MCF 10A (cell line): ENCODE measurements at regions of chr7 and their contacts with region 1.

Region 1: GRCh38 chr7:99270683-99271082 is 2.0 kb upstream of the MYH16 start:
- DNase-seq: no peak
- H3K4me3 Mint-ChIP-seq: no peak overlapping the region
- H3K27ac Mint-ChIP-seq: no peak overlapping the region
- H3K4me1 Mint-ChIP-seq: peaks cover 27% of the 10 kb centered on the region
- H3K27me3 Mint-ChIP-seq: no peaks in the 10 kb centered on the region
- CTCF ChIP-seq: no peak

Region 2: DNA sequence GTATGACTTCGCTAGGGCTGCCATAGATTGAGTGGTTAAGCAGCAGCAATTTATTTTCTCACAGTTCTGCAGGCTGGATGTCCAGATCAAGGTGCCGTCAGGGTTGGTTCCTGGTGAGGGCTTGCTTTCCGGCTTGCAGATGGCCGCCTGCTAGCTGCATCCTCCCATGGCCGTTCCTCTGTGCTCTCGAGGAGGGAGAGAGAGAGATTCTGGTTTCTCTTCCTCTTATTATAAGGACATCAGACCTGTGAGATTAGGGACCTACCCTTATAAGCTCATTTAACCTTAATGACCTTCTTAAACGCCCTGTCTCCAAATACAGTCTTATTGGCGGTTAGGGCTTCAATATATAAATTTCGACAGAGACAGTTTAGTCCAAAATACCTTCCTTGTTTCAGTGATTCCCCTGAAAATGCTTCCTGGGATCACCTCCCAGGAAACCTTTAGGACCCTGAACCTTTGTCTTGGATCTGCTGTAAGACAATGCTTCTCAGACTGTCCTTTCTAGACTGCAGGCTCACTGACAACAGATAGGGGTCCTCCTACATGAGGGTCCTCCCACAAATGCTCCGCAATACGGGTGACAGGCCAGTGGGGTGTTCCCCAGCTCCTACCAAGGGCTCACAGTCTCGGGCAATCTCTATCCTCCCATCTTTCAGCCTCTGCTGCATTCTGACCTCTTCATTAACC is 787.3 kb before region 1 on chr7:
- CTCF ChIA-PET with region 1: no interaction called
- POLR2A ChIA-PET with region 1: no interaction called
- intact Hi-C with region 1: no loop called
- DNase-seq: no peak
- H3K4me3 Mint-ChIP-seq: no peak overlapping the region
- H3K27ac Mint-ChIP-seq: no peak overlapping the region
- H3K4me1 Mint-ChIP-seq: no peaks in the 10 kb centered on the region
- H3K27me3 Mint-ChIP-seq: peaks cover 8% of the 10 kb centered on the region
- CTCF ChIP-seq: no peak

Region 3: DNA sequence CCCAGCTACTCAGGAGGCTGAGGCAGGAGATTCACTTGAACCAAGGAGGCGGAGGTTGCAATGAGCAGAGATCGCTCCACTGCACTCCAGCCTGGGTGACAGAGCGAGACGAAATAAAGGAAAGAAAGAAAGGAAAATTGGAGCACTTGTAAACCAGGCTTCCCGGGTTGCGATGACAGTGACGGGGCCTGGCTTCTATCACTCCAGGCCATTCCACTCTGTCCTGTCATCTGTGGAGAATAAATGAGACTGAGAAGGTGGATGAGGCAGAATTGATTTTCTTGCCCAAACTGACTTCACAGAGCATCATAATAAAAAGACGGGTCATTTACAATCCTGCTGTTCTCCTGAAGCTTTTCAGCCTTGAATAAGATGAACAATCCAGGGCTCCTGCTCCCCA is 50.7 kb before region 1 on chr7:
- CTCF ChIA-PET with region 1: interaction called, 3 read pairs
- POLR2A ChIA-PET with region 1: interaction called, 3 read pairs
- intact Hi-C with region 1: loop called (anchors 2 kb)
- DNase-seq: no peak
- H3K4me3 Mint-ChIP-seq: no peak overlapping the region
- H3K27ac Mint-ChIP-seq: no peak overlapping the region
- H3K4me1 Mint-ChIP-seq: peaks cover 16% of the 10 kb centered on the region
- H3K27me3 Mint-ChIP-seq: no peaks in the 10 kb centered on the region
- CTCF ChIP-seq: no peak